Naive thymus-derived CD4-positive, alpha-beta T cell (primary cell): ENCODE measurements at regions of chr2 and their contacts with region 1.

Region 1: GRCh38 chr2:155727182-155727895 is 605.2 kb downstream of the NR4A2 start:
- DNase-seq: no peak
- ATAC-seq: no peak
- H3K4me3 ChIP-seq: no peak overlapping the region
- H3K4me3 Mint-ChIP-seq: peak overlapping the region in 1 of 10 donors; percentile 51
- H3K27ac ChIP-seq: no peak overlapping the region
- H3K27ac Mint-ChIP-seq: no peak overlapping the region
- H3K4me1 ChIP-seq: no peaks in the 10 kb centered on the region
- H3K4me1 Mint-ChIP-seq: no peaks in the 10 kb centered on the region
- H3K27me3 ChIP-seq: no peaks in the 10 kb centered on the region
- H3K27me3 Mint-ChIP-seq: no peaks in the 10 kb centered on the region

Region 2: GRCh38 chr2:155377266-155377680 is 350.1 kb before region 1 on chr2:
- CTCF ChIA-PET with region 1: no interaction called
- POLR2A ChIA-PET with region 1: no interaction called
- intact Hi-C with region 1: no loop called
- DNase-seq: no peak
- ATAC-seq: no peak
- H3K4me3 ChIP-seq: no peak overlapping the region
- H3K4me3 Mint-ChIP-seq: no peak overlapping the region
- H3K27ac ChIP-seq: no peak overlapping the region
- H3K27ac Mint-ChIP-seq: no peak overlapping the region
- H3K4me1 ChIP-seq: no peaks in the 10 kb centered on the region
- H3K4me1 Mint-ChIP-seq: peaks cover 0 to 4% (median 0%) of the 10 kb centered on the region in 7 donors
- H3K27me3 ChIP-seq: peaks cover 0 to 3% of the 10 kb centered on the region in 2 donors
- H3K27me3 Mint-ChIP-seq: peaks cover 0 to 8% (median 6%) of the 10 kb centered on the region in 5 donors

Region 3: GRCh38 chr2:155714983-155715382 is 12.4 kb before region 1 on chr2:
- CTCF ChIA-PET with region 1: interaction called, 3 read pairs
- POLR2A ChIA-PET with region 1: no interaction called
- intact Hi-C with region 1: loop called in 1 of 2 experiments (anchors 1 kb)
- DNase-seq: no peak
- ATAC-seq: no peak
- H3K4me3 ChIP-seq: no peak overlapping the region
- H3K4me3 Mint-ChIP-seq: no peak overlapping the region
- H3K27ac ChIP-seq: no peak overlapping the region
- H3K27ac Mint-ChIP-seq: no peak overlapping the region
- H3K4me1 ChIP-seq: no peaks in the 10 kb centered on the region
- H3K4me1 Mint-ChIP-seq: no peaks in the 10 kb centered on the region
- H3K27me3 ChIP-seq: no peaks in the 10 kb centered on the region
- H3K27me3 Mint-ChIP-seq: no peaks in the 10 kb centered on the region

Region 4: DNA sequence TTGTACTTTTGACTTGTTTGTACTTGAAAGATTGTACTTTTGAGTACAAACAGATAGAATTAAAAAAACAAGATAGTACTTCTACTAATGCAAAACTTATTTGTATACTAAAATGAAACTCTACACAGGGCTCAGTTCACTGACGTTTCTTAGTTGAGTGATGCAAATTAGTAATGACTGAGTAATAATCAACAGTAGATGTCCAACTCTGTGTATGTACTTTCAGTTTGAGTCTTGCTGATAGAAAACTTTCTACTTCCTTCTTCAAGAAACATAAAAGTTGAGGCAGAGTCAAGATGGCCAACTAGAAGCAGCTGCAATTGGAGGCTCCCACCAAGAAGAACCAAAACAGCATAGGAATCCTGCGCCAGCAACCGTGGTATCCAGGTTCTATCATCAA is 20.2 kb after region 1 on chr2:
- CTCF ChIA-PET with region 1: no interaction called
- POLR2A ChIA-PET with region 1: no interaction called
- intact Hi-C with region 1: no loop called
- DNase-seq: no peak
- ATAC-seq: no peak
- H3K4me3 ChIP-seq: no peak overlapping the region
- H3K4me3 Mint-ChIP-seq: no peak overlapping the region
- H3K27ac ChIP-seq: no peak overlapping the region
- H3K27ac Mint-ChIP-seq: no peak overlapping the region
- H3K4me1 ChIP-seq: no peaks in the 10 kb centered on the region
- H3K4me1 Mint-ChIP-seq: no peaks in the 10 kb centered on the region
- H3K27me3 ChIP-seq: no peaks in the 10 kb centered on the region
- H3K27me3 Mint-ChIP-seq: peaks cover 0 to 4% (median 0%) of the 10 kb centered on the region in 5 donors